ENCODE measurements at regions of chr4 and their contacts with region 1.

Region 1: DNA sequence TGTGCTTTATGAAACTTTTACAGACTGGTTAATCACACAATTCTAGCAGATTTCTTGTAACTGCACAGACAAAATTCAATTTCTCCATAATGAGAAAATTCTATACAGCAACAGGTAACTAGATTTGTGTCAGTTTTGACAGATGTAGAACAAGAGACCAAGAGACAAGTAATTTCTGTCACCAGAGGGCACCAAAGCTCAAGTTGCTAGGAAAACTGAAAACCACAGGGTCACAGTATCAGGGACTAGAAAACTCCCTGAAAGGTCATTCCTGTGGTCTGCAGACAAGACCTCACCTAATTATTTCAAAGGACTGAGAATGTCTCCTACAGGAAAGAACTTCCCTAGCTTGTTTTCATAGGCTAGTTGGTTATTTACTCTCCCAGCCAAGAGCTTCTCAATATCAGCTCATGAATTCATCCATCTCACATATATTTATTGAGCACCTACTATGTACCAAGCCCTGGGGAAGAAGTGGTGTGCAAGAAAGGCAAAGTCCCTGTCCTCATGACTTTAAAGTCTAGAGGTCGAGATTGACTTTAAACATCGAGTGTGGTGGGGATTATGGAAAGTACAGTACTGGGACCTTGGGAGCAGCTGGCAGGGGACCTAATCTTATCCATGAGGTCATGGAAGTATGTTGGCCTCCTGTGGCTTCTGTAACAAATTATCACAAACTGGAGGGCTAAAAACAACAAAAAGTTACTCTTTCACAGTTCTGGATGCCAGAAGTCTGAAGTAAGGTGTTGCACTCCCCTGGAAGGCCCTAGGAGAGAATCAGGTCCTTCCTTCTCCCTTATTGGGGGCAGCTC is 47.8 kb upstream of the SETD7 start:
- DNase-seq: peak; percentile 50 to 80 (median 53)
- ATAC-seq: peak; percentile 87
- H3K4me3 ChIP-seq: no peak overlapping the region
- H3K27ac ChIP-seq: no peak overlapping the region
- H3K4me1 ChIP-seq: peaks cover 7 to 12% of the 10 kb centered on the region in 2 experiments; a peak in 3 of 5 replicates
- H3K27me3 ChIP-seq: peaks cover 17 to 19% of the 10 kb centered on the region in 2 experiments
- CTCF ChIP-seq: peak; percentile 64 to 86 (median 73)
- EP300 ChIP-seq: peak; percentile 20; the same call in 1 of the 2 replicates
- POLR2A ChIP-seq: no peak
- RAD21 ChIP-seq: peak; percentile 83 to 84

Region 2: DNA sequence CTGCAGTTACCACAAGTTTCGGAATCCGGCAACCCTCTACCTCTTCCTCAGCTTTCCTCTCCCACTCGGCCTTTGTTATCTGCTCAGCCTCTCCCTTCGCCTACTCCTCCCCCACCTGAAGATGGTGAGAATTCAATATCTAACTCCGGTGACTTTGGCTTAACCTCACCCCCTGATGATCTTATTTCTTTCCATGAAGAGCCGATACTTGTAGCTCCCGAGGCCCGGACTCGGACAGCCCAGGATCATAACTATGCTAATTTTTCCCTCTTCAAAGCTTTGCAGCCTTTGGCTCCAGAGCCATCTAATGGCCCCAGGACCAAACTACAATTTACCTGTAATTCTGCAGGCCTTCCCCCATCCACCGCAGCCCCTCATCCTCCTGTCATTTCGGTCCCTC is 29.9 kb after region 1 on chr4:
- CTCF ChIA-PET with region 1: interaction called, 3 read pairs
- POLR2A ChIA-PET with region 1: no interaction called
- in situ Hi-C with region 1: no loop called
- intact Hi-C with region 1: loop called (anchors 1 kb)
- DNase-seq: peak in 2 of 4 experiments; percentile 18 to 36
- ATAC-seq: peak; percentile 90
- H3K4me3 ChIP-seq: no peak overlapping the region
- H3K27ac ChIP-seq: no peak overlapping the region
- H3K4me1 ChIP-seq: peaks cover 0 to 4% of the 10 kb centered on the region in 2 experiments; a peak in 2 of 5 replicates
- H3K27me3 ChIP-seq: peaks cover 13 to 14% of the 10 kb centered on the region in 2 experiments
- CTCF ChIP-seq: peak; percentile 56 to 69 (median 57)
- EP300 ChIP-seq: no peak
- POLR2A ChIP-seq: no peak
- RAD21 ChIP-seq: peak; percentile 47 to 56; a peak in 3 of 4 replicates

Region 3: DNA sequence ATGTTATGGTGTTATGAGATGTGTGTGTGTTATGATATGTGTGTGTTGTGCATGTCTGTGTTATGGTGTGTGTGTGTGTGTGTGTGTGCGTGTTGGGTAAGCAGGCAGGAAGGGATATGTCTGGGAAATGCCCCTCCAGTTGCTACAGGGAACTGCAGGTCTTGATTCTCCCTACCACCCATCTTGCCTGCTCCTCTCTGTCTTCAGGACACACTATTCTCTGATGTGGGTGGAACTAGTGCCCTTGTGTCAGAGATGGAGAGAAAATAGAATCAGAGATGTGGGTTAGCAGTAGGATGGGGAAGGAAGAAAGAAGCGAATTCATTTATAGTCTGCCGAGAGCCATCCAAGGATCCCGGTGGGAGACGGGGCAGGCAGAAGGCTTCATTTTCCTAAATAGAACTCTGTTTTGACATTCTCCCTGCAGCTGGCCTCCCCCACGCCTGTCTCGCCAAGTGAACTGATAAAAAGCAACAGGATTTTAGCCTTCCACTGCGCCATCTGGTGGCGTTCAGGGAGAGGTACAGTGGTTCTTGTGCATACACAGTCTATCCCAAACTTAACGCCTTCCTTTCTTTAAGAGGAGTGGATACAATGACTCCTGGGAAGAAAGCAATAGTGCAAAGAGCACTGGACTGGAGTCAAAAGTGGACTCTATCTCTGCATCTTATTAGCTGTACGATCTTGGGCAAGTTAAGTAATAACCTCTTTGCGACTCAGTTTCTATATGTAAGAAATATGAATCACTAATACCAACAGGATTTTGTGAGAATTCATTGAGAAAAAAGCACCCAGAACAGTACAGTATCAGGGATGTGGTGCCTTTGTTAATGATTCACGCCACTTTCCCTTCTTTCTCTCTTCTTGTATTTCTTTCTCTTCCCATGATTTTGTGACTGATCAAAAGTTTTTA is 47.8 kb after region 1 on chr4:
- CTCF ChIA-PET with region 1: interaction called, 25 read pairs
- POLR2A ChIA-PET with region 1: no interaction called
- in situ Hi-C with region 1: loop called (anchors 5 kb)
- intact Hi-C with region 1: loop called (anchors 1 kb)
- DNase-seq: peak; percentile 67 to 91 (median 72)
- ATAC-seq: peak; percentile 91
- H3K4me3 ChIP-seq: no peak overlapping the region
- H3K27ac ChIP-seq: no peak overlapping the region
- H3K4me1 ChIP-seq: peaks cover 0 to 3% of the 10 kb centered on the region in 2 experiments; a peak in 2 of 5 replicates
- H3K27me3 ChIP-seq: peaks cover 7 to 18% of the 10 kb centered on the region in 2 experiments; a peak in 4 of 5 replicates
- CTCF ChIP-seq: peak; percentile 87 to 93 (median 89)
- EP300 ChIP-seq: 0 out of 2 replicates have a peak, but pooled peaks have one; percentile 13
- POLR2A ChIP-seq: no peak
- RAD21 ChIP-seq: peak; percentile 80 to 85

Region 4: DNA sequence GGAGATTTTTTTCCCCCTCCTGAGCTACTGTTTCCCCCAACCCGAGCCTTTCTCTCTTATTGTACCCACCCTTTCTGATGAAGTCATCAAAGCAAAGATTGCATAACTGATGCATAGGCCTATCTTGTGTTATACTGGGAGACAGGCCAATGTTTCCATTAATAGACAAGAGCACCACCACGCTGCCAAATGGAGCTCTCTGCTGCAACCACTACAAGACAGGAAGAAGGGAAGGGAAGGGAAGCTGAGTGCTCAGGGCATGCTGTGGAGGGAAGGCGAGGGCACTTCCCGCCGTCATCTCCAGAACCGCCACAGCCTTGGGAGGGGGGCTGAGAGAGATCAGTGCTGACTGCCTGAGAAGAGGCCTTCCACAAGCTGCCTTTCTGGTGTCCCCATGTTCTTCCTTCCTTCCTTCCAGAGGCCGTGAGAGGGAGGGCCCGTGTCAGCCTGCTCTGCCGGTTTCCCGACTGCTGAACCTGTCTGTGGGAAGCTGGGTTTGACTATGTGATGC is 136.8 kb after region 1 on chr4:
- CTCF ChIA-PET with region 1: interaction called, 5 read pairs
- POLR2A ChIA-PET with region 1: no interaction called
- in situ Hi-C with region 1: no loop called
- intact Hi-C with region 1: loop called (anchors 1 kb)
- DNase-seq: peak in 1 of 4 experiments; percentile 28
- ATAC-seq: peak; percentile 86
- H3K4me3 ChIP-seq: no peak overlapping the region
- H3K27ac ChIP-seq: no peak overlapping the region
- H3K4me1 ChIP-seq: no peaks in the 10 kb centered on the region
- H3K27me3 ChIP-seq: peaks cover 7 to 28% of the 10 kb centered on the region in 2 experiments
- CTCF ChIP-seq: peak; percentile 36 to 68 (median 37); a peak in 3 of 6 replicates
- EP300 ChIP-seq: no peak
- POLR2A ChIP-seq: no peak
- RAD21 ChIP-seq: peak; percentile 73 to 77

Region 5: DNA sequence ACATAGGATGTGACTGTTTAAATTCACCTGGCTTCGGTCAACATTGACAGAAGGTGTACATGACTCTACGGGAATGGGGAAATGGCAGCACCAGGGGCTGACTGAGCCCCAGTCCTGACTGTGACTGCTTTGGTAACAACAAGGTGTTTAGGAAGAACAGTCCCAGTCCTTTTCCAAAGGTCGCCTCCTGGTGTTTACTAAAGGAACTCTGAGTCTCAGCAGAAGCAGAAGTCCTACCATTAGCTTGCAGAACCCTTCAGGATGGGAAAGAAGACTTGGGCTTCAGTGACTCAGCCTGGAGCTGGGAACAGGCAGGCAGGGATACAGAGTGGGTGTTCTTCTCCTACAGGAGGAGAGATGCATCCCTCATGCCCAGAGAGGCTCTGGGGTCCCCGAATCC is 165.1 kb after region 1 on chr4:
- CTCF ChIA-PET with region 1: no interaction called
- POLR2A ChIA-PET with region 1: no interaction called
- in situ Hi-C with region 1: no loop called
- intact Hi-C with region 1: loop called (anchors 1 kb)
- DNase-seq: peak in 3 of 4 experiments; percentile 17 to 34 (median 30)
- ATAC-seq: peak; percentile 85
- H3K4me3 ChIP-seq: no peak overlapping the region
- H3K27ac ChIP-seq: no peak overlapping the region
- H3K4me1 ChIP-seq: no peaks in the 10 kb centered on the region
- H3K27me3 ChIP-seq: peaks cover 14 to 23% of the 10 kb centered on the region in 2 experiments
- CTCF ChIP-seq: peak; percentile 44 to 58 (median 51); a peak in 5 of 6 replicates
- EP300 ChIP-seq: no peak
- POLR2A ChIP-seq: no peak
- RAD21 ChIP-seq: peak in 1 of 2 experiments; percentile 57; a peak in 2 of 4 replicates